OCI-LY7 (cell line): ENCODE measurements at regions of chr1 and their contacts with region 1.

Region 1: GRCh38 chr1:84541679-84542078 is 32.6 kb downstream of the CTBS start:
- DNase-seq: peak; percentile 8
- H3K4me3 ChIP-seq: no peak overlapping the region
- H3K27ac ChIP-seq: no peak overlapping the region
- H3K4me1 ChIP-seq: no peaks in the 10 kb centered on the region
- CTCF ChIP-seq: peak; percentile 68

Region 2: GRCh38 chr1:84433258-84434080 is 108.2 kb before region 1 on chr1:
- CTCF ChIA-PET with region 1: no interaction called
- POLR2A ChIA-PET with region 1: no interaction called
- intact Hi-C with region 1: loop called (anchors 5 kb)
- DNase-seq: peak; percentile 76
- H3K4me3 ChIP-seq: peak overlapping the region; percentile 52
- H3K27ac ChIP-seq: no peak overlapping the region
- H3K4me1 ChIP-seq: peaks cover 26% of the 10 kb centered on the region
- CTCF ChIP-seq: peak; percentile 95

Region 3: DNA sequence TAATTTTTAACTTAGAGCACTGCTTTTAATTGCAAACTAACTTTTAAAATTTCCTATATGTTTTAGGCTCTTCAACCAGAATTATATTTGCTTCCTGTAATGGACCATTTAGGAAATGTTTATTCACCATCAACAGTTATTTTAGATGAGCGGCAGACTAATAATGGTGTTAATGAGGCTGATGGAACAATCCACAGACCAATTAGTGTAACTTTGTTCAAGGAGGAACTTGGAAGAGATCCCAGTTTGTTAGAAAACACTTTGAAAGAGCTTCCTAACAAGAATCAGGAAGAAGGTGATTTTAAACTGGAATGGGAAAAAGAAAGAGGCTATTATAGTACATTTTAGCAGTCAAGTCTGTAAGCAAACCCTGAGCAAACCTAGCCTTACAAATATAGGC is 15.9 kb before region 1 on chr1:
- CTCF ChIA-PET with region 1: no interaction called
- POLR2A ChIA-PET with region 1: no interaction called
- intact Hi-C with region 1: loop called (anchors 2 kb)
- DNase-seq: no peak
- H3K4me3 ChIP-seq: no peak overlapping the region
- H3K27ac ChIP-seq: no peak overlapping the region
- H3K4me1 ChIP-seq: no peaks in the 10 kb centered on the region
- CTCF ChIP-seq: no peak